OCI-LY7 (cell line): ENCODE measurements at regions of chr16 and their contacts with region 1.

Region 1: DNA sequence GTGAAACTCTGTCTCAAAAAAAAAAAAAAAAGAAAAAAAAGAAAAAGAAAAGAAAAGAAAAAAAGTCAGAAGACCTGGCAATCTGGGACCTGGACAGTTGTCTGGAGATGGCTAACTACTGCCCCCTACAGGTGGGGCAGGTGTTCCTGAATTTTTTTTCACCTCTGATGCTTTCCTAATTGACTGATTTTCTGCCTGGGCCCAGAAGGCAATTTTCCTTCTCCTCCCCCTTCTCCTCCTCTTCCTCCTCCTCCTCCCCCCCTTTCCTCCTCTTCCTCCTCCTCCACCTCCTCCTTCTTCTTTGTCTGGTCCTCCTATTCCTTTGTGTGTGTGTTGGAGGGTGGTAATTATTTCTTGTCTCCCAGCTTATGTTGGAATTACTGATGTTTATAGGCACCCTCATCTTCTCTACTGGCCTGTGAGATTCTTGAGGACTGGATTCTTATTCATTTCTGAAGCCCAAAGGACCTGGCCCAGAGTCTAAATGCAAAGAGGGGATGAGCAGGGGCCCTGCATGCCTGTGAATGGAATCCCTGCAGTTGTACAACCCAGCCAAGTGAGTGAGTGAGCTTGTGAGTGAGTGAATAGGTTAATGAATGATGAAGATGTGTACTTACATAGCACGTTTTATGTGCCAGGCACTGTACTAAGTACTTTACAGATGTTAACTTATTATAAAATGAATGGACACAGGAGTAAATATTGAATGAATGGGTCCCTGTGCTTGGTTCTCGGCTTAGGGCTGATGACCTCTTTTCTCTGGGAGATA is 26.9 kb downstream of the IRX5 start:
- DNase-seq: peak; percentile 70
- H3K4me3 ChIP-seq: no peak overlapping the region
- H3K27ac ChIP-seq: no peak overlapping the region
- H3K4me1 ChIP-seq: no peaks in the 10 kb centered on the region
- CTCF ChIP-seq: peak; percentile 73

Region 2: DNA sequence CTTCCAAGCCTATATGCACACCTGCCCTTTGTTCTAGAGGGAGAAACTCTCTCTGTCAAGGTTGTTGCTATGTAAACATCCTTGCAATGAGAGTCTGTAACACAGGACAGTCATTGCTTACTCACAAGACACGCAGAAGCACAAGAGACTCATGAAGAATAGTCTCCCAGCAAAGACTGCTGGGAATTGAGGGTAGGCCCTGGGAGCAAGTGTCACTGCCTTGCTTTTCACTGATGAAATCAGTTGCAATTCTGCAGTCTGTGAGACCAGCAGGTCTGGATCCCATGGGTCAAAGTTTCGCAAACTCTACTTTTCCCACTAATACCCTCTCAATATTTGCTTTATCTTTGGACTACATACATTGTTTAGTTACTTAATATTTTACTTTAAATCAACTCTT is 1076.2 kb before region 1 on chr16:
- CTCF ChIA-PET with region 1: no interaction called
- POLR2A ChIA-PET with region 1: no interaction called
- intact Hi-C with region 1: loop called (anchors 10 kb)
- DNase-seq: no peak
- H3K4me3 ChIP-seq: no peak overlapping the region
- H3K27ac ChIP-seq: no peak overlapping the region
- H3K4me1 ChIP-seq: no peaks in the 10 kb centered on the region
- CTCF ChIP-seq: no peak

Region 3: DNA sequence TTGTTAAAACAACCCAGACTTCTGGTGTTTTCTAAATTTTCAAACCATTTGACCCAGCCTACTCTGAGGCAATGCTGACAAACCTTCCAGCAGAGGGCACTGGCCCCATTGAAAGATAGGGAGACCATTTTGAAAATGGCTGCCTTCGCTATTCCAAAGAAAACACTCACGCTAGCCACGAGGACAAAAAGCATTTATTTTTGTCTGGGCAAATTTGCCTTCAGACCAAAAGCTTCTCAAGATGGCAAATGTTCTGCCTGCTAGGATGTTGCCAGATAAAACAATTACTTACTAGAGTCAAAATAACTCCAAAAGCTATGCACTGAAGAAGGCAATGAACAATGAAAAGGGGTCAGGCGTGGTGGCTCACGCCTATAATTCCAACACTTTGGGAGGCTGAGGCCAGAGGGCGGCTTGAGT is 323.6 kb before region 1 on chr16:
- CTCF ChIA-PET with region 1: no interaction called
- POLR2A ChIA-PET with region 1: no interaction called
- intact Hi-C with region 1: loop called (anchors 10 kb)
- DNase-seq: peak; percentile 29
- H3K4me3 ChIP-seq: no peak overlapping the region
- H3K27ac ChIP-seq: no peak overlapping the region
- H3K4me1 ChIP-seq: no peaks in the 10 kb centered on the region
- CTCF ChIP-seq: peak; percentile 79

Region 4: DNA sequence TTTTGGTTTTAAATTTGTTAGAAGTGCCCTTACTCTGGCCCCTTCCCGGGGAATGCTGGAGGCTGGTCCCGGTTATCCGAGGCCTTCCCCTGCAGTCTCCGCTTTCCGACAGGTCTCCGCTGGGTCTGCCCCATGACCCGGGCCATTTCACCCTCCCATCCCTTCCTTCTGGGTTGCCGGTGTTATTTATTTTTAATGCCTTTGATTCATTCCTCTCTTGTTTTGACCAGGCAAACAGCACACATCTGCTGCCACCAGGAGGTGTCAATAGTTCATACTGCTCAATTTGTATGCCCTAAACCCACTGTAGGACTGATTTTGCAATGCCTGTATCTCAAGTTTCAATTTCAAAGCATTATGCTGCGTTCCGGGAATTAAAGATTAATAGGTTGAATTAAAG is 140.1 kb before region 1 on chr16:
- CTCF ChIA-PET with region 1: no interaction called
- POLR2A ChIA-PET with region 1: no interaction called
- intact Hi-C with region 1: loop called (anchors 10 kb)
- DNase-seq: peak; percentile 38
- H3K4me3 ChIP-seq: no peak overlapping the region
- H3K27ac ChIP-seq: no peak overlapping the region
- H3K4me1 ChIP-seq: no peaks in the 10 kb centered on the region
- CTCF ChIP-seq: peak; percentile 62

Region 5: DNA sequence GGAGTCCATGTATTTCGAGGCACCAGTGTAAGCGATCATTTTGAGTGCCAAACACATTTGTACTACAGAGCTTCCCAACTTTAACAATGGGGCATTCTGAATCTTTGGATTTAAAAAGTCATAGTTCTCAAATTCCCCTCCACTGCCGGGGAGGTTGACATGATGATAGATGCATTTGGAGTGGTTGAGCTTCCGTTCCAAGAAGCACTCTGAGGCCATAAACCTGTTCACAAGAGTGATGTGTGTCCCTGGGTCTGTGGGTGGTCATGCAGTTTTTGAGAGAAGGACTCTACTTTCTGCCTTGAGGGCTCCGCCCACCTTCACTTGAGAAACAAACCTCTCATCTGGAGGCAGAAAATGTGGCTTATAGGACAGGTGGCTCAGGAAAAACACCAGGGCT is 16.8 kb after region 1 on chr16:
- CTCF ChIA-PET with region 1: no interaction called
- POLR2A ChIA-PET with region 1: no interaction called
- intact Hi-C with region 1: no loop called
- DNase-seq: no peak
- H3K4me3 ChIP-seq: no peak overlapping the region
- H3K27ac ChIP-seq: no peak overlapping the region
- H3K4me1 ChIP-seq: no peaks in the 10 kb centered on the region
- CTCF ChIP-seq: no peak